AG04449 (cell line): ENCODE measurements at regions of chr3 and their contacts with region 1.

Region 1: DNA sequence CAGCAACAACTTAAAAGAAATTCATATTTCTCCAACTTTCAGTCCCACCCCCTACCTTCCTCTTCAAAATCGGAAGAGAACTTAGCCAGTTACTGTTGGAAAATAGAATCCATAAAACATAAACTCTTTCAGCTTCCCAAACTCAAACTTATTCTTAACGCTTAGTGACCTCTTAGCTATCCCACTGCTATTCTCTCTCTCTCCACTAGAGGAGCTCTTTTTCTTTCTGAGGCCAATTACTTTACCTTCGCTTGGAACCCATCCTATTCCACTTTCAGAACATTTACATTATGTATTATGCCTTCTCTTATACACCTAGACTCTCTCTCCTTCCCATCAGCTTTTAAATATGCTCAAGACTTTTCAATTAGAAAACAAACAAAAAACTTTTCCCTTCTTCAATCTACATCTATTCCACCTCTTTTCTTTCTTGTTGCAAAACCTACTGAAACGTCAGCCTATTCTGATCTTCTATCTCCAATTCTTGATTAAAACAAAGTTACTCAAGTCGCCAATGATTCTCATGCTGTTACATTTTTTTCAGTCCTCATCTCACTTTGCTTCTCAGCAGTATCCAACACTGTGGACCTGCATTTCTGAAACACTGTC is 13.4 kb upstream of the GHSR start:
- DNase-seq: no peak
- H3K4me3 ChIP-seq: no peak overlapping the region
- CTCF ChIP-seq: peak; percentile 59

Region 2: DNA sequence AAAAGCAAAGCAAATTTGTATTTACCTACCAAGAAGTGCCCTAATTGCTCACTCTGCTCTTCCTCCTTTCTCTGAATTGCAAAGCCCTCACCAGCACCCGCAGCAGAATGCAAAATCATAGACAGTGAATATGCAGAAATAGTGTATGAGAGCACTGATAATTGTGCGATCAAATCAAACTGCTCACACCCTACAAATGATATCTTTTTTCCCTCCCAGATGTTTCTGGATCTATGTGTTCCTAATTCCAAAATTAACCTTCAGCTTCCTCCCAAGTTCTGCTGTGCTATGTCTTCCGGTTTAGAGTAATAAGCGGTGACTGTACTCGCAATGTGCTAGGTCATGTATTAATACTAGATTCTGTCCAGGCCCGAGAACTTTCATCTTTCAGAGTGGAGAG is 16.8 kb before region 1 on chr3:
- CTCF ChIA-PET with region 1: interaction called, 10 read pairs
- POLR2A ChIA-PET with region 1: no interaction called
- DNase-seq: no peak
- H3K4me3 ChIP-seq: no peak overlapping the region
- CTCF ChIP-seq: no peak

Region 3: DNA sequence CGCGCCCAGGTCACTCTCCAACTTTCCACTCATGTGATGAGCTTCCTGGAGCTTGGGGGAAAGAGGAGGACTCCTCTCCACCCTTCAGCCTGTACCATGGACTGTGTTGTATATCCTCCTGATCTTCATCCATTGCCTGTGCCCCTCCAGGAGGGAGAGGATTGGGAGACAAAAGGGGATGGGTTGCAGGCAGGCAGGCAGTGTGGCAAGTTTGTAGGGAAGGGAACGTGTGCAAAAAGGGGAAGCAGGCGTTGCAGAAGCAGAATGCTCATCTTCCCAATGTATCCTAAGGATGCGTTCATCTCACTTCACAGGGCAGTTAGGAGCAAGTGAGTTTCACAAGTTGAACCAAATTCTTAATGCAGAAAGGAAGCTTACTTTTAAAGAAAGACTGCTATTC is 14.7 kb after region 1 on chr3:
- CTCF ChIA-PET with region 1: interaction called, 11 read pairs
- POLR2A ChIA-PET with region 1: no interaction called
- DNase-seq: no peak
- H3K4me3 ChIP-seq: no peak overlapping the region
- CTCF ChIP-seq: no peak

Region 4: GRCh38 chr3:172524611-172525010 is 63.0 kb after region 1 on chr3:
- CTCF ChIA-PET with region 1: no interaction called
- POLR2A ChIA-PET with region 1: no interaction called
- DNase-seq: no peak
- H3K4me3 ChIP-seq: no peak overlapping the region
- CTCF ChIP-seq: no peak

Region 5: DNA sequence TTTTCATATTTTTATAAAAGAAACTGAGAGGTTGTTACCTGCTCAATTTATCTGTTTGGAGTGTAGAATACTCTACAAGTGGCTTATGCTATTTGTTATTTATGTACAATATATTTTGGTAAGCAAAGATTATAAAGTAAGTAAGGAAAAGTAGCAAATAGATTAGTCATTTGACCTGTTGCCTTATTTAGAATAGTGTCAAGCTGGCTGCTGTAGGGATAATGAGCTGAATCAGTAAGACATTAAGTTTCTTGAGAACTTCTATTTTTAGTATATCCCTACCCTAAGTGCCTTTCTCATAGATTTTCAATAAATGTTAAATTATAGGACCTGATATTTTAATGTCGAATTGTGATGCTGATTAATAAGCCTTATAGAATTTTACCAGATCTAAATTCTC is 326.1 kb after region 1 on chr3:
- CTCF ChIA-PET with region 1: no interaction called
- POLR2A ChIA-PET with region 1: no interaction called
- DNase-seq: peak; percentile 16
- H3K4me3 ChIP-seq: no peak overlapping the region
- CTCF ChIP-seq: no peak